PC-9 (cell line): ENCODE measurements at regions of chr18 and their contacts with region 1.

Region 1: GRCh38 chr18:750456-750855 is 38.0 kb upstream of the ENOSF1 start:
- DNase-seq: no peak
- H3K4me3 ChIP-seq: no peak overlapping the region
- H3K27ac ChIP-seq: no peak overlapping the region
- H3K4me1 ChIP-seq: no peaks in the 10 kb centered on the region
- H3K27me3 ChIP-seq: no peaks in the 10 kb centered on the region
- CTCF ChIP-seq: no peak

Region 2: GRCh38 chr18:361939-362309 is 388.5 kb before region 1 on chr18:
- CTCF ChIA-PET with region 1: no interaction called
- POLR2A ChIA-PET with region 1: no interaction called
- intact Hi-C with region 1: no loop called
- DNase-seq: peak in 1 of 2 experiments; percentile 64
- H3K4me3 ChIP-seq: no peak overlapping the region
- H3K27ac ChIP-seq: no peak overlapping the region
- H3K4me1 ChIP-seq: 0 out of 2 replicates have a peak, but pooled peaks cover 11% of the 10 kb centered on the region
- H3K27me3 ChIP-seq: peaks cover 95% of the 10 kb centered on the region
- CTCF ChIP-seq: no peak

Region 3: GRCh38 chr18:765764-766549 is 15.5 kb after region 1 on chr18:
- CTCF ChIA-PET with region 1: no interaction called
- POLR2A ChIA-PET with region 1: interaction called, 14 read pairs
- intact Hi-C with region 1: no loop called
- DNase-seq: no peak
- H3K4me3 ChIP-seq: no peak overlapping the region
- H3K27ac ChIP-seq: no peak overlapping the region
- H3K4me1 ChIP-seq: peaks cover 10% of the 10 kb centered on the region
- H3K27me3 ChIP-seq: no peaks in the 10 kb centered on the region
- CTCF ChIP-seq: no peak

Region 4: DNA sequence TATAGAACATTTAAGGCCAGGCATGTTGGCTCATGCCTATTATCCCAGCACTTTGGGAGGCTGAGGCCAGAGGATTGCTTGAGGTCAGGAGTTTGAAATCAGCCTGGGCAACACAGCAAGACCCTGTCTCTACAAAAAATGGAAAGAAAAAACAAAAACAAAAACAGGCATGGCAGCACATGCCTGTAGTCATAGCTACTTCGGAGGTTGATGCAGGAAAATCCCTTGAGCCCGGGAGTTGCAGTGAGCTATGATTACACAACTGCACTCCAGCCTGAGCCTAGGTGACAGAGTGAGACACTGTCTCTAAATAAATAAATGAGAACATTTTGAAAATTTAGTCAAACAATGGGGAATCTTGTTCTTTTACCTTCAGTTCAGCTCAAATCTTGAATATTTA is 73.7 kb after region 1 on chr18:
- CTCF ChIA-PET with region 1: no interaction called
- POLR2A ChIA-PET with region 1: no interaction called
- intact Hi-C with region 1: no loop called
- DNase-seq: no peak
- H3K4me3 ChIP-seq: no peak overlapping the region
- H3K27ac ChIP-seq: no peak overlapping the region
- H3K4me1 ChIP-seq: no peaks in the 10 kb centered on the region
- H3K27me3 ChIP-seq: no peaks in the 10 kb centered on the region
- CTCF ChIP-seq: no peak